Activated CD8-positive, alpha-beta T cell treated with anti-CD3 and anti-CD28 coated beads, Interleukin-2, amount 10 ng/mL, durations not matched to agents 7 days and 5 days (primary cell): ENCODE measurements at regions of chr19 and their contacts with region 1.

Region 1: GRCh38 chr19:20565321-20566018 is at the start of gene ZNF737:
- DNase-seq: peak; percentile 96
- ATAC-seq: peak; percentile 99
- H3K4me3 Mint-ChIP-seq: peak within 1 kb of the TSS; percentile 99
- H3K27ac Mint-ChIP-seq: peak within 1 kb of the TSS; percentile 99
- H3K4me1 Mint-ChIP-seq: peaks cover 7% of the 10 kb centered on the region
- H3K27me3 Mint-ChIP-seq: no peaks in the 10 kb centered on the region
- total RNA-seq, gene ZNF737: 18.4 to 19.1 TPM

Region 2: DNA sequence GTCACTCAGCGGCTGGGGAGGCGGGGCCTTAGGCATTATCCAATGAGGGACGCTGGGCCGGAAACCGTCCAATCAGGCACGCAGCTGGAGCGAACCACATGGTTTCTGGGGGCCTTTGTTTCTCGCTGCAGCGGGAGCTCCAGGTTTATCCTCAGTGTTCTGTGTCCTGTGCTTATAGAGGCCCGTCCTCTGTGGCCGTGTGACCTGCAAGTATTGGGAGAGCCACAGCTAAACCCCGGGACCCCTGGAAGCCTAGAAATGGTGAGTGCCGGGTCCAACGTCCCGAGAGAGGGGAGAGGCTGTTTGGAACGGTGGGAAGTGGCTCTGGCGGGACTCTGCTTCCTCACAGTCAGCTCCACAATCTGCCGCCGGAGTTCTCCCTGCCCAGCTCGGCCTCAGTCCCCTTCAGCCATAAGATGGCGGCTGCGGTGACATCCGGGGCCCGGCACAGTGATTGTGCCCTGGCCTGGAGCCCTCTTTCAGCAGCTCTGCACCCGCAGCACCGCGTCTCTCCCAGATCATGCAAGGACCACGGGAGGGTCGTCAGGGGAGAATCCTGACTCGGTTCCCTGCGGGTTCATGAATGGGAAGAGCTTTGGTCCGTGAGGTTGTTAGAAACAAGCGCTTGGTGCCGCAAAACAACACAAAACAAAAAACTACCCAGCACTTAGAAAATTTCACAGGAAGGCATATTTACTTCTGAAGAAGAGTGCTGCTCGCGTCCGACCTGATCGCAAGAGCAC is 699.6 kb before region 1 on chr19 and contains the start of gene ZNF253:
- CTCF ChIA-PET with region 1: no interaction called
- POLR2A ChIA-PET with region 1: interaction called, 10 read pairs
- DNase-seq: peak; percentile 99
- ATAC-seq: peak; percentile 96
- H3K4me3 Mint-ChIP-seq: peak within 1 kb of the TSS; percentile 100
- H3K27ac Mint-ChIP-seq: peak within 1 kb of the TSS; percentile 100
- H3K4me1 Mint-ChIP-seq: peaks cover 32% of the 10 kb centered on the region
- H3K27me3 Mint-ChIP-seq: no peaks in the 10 kb centered on the region
- total RNA-seq, gene ZNF253: 15.7 to 17.5 TPM

Region 3: GRCh38 chr19:20237761-20238623 is 327.5 kb before region 1 on chr19:
- CTCF ChIA-PET with region 1: no interaction called
- POLR2A ChIA-PET with region 1: interaction called, 10 read pairs
- DNase-seq: peak; percentile 94
- ATAC-seq: peak; percentile 96
- H3K4me3 Mint-ChIP-seq: peak overlapping the region; percentile 100
- H3K27ac Mint-ChIP-seq: peak overlapping the region; percentile 99
- H3K4me1 Mint-ChIP-seq: peaks cover 20% of the 10 kb centered on the region
- H3K27me3 Mint-ChIP-seq: no peaks in the 10 kb centered on the region

Region 4: DNA sequence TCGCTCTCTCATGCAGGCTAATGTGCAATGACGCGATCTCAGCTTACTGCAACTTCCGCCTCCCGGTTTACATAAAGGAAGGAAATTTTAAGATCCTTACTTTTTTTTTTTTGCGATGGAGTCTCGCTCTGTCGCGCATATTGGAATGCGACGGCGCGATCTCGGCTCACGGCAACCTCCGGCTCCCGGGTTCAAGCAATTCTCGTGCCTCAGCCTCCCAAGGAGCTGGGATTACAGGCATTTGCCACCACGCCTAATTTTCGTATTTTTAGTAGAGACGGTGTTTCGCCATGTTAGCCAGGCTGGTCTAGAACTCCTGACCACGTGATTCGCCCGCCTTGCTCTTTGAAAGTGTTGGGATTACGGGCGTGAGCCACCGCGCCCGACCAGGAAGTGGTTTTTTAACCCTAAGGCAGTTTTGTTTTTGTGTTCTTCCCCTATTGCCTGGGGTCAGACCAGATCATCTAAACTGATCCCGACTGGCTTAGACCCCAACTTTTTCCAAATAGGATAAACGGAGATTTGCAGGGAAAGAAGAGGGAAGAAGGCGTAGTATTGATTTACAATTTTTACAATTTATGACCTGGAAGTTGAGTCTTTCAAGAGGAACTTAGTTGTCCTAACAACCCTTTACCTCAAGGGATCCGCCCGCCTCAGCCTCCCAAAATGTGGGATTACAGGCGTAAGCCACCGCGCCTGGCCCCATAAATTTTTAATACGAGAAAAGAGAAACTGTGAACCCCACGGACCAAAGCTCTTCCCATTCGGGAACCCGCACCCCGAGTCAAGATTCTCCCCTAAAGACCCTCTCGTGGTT is 141.9 kb before region 1 on chr19:
- CTCF ChIA-PET with region 1: no interaction called
- POLR2A ChIA-PET with region 1: interaction called, 31 read pairs
- DNase-seq: peak; percentile 54
- ATAC-seq: no peak
- H3K4me3 Mint-ChIP-seq: peak overlapping the region; percentile 96
- H3K27ac Mint-ChIP-seq: peak overlapping the region; percentile 98
- H3K4me1 Mint-ChIP-seq: peaks cover 15% of the 10 kb centered on the region
- H3K27me3 Mint-ChIP-seq: no peaks in the 10 kb centered on the region

Region 5: GRCh38 chr19:20661150-20661819 is 95.8 kb after region 1 on chr19 and contains the start of gene ZNF626:
- CTCF ChIA-PET with region 1: interaction called, 4 read pairs
- POLR2A ChIA-PET with region 1: interaction called, 18 read pairs
- DNase-seq: peak; percentile 95
- ATAC-seq: peak; percentile 99
- H3K4me3 Mint-ChIP-seq: peak within 1 kb of the TSS; percentile 91
- H3K27ac Mint-ChIP-seq: peak within 1 kb of the TSS; percentile 93
- H3K4me1 Mint-ChIP-seq: peaks cover 18% of the 10 kb centered on the region
- H3K27me3 Mint-ChIP-seq: no peaks in the 10 kb centered on the region
- total RNA-seq, gene ZNF626: 7.0 to 9.1 TPM

Region 6: DNA sequence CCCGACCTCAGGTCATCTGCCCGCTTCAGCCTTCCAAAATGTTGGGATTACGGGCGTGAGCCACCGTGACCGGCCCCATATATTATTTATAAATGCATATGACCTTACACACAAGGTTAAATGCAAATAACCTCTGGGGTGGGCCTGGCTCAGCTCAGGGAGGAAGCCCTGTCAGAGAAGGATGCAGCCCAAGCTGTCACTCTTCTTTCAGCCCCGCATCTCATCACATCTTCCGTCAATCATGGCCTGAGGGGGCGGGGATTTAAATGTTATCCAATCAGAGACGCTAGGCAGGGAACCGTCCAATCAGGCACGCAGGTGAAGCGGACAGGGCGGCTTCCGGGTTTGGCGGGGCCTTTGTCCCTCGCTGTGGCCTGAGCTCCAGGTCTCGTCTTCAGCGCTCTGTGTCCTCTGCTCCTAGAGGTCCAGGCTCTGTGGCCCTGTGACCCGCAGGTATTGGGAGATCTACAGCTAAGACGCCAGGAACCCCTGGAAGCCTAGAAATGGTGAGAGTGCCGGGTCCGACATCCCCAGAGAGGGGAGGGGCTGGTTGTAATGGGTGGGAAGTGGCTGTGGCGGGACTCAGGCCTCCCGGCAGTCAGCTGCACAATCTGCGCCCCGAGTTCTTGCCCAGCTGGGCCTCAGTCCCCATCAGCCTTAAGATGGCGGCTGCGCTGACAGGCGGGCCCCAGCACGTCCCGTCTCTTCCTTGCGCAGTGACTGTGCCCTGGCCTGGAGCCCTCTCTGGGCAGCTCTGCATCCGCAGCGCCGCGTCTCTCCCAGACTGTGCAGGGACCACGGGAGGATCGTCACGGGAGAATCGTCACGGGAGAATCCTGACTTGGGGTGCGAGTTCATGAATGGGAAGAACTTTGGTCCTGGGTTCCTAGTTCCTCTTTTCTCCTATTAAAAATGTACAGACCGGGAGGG is 455.1 kb after region 1 on chr19 and contains the start of gene ZNF430:
- CTCF ChIA-PET with region 1: no interaction called
- POLR2A ChIA-PET with region 1: interaction called, 16 read pairs
- DNase-seq: peak; percentile 98
- ATAC-seq: peak; percentile 96
- H3K4me3 Mint-ChIP-seq: peak within 1 kb of the TSS; percentile 99
- H3K27ac Mint-ChIP-seq: peak within 1 kb of the TSS; percentile 99
- H3K4me1 Mint-ChIP-seq: peaks cover 35% of the 10 kb centered on the region
- H3K27me3 Mint-ChIP-seq: no peaks in the 10 kb centered on the region
- total RNA-seq, gene ZNF430: 22.0 to 25.5 TPM